PC-3 (cell line): ENCODE measurements at regions of chr1 and their contacts with region 1.

Region 1: GRCh38 chr1:233613252-233614174 is at the start of gene KCNK1:
- DNase-seq: peak; percentile 96
- ATAC-seq: peak; percentile 88
- H3K4me3 ChIP-seq: peak within 1 kb of the TSS; percentile 90
- H3K27ac ChIP-seq: peak within 1 kb of the TSS; percentile 86
- H3K4me1 ChIP-seq: peaks cover 24% of the 10 kb centered on the region
- H3K27me3 ChIP-seq: no peaks in the 10 kb centered on the region
- CTCF ChIP-seq: no peak
- total RNA-seq, gene KCNK1: 31.1 and 34.7 TPM in 2 replicates

Region 2: GRCh38 chr1:233518349-233518748 is 95.2 kb before region 1 on chr1:
- CTCF ChIA-PET with region 1: no interaction called
- POLR2A ChIA-PET with region 1: no interaction called
- intact Hi-C with region 1: loop called (anchors 10 kb)
- DNase-seq: peak; percentile 85
- ATAC-seq: no peak
- H3K4me3 ChIP-seq: no peak overlapping the region
- H3K27ac ChIP-seq: no peak overlapping the region
- H3K4me1 ChIP-seq: peaks cover 17% of the 10 kb centered on the region
- H3K27me3 ChIP-seq: no peaks in the 10 kb centered on the region
- CTCF ChIP-seq: peak; percentile 98

Region 3: GRCh38 chr1:233543340-233544255 is 69.9 kb before region 1 on chr1:
- CTCF ChIA-PET with region 1: no interaction called
- POLR2A ChIA-PET with region 1: no interaction called
- intact Hi-C with region 1: loop called (anchors 1 kb)
- DNase-seq: peak; percentile 98
- ATAC-seq: peak; percentile 100
- H3K4me3 ChIP-seq: no peak overlapping the region
- H3K27ac ChIP-seq: peak overlapping the region; percentile 78
- H3K4me1 ChIP-seq: peaks cover 17% of the 10 kb centered on the region
- H3K27me3 ChIP-seq: no peaks in the 10 kb centered on the region
- CTCF ChIP-seq: no peak

Region 4: GRCh38 chr1:233662575-233663304 is 49.2 kb after region 1 on chr1:
- CTCF ChIA-PET with region 1: no interaction called
- POLR2A ChIA-PET with region 1: no interaction called
- intact Hi-C with region 1: no loop called
- DNase-seq: no peak
- ATAC-seq: no peak
- H3K4me3 ChIP-seq: no peak overlapping the region
- H3K27ac ChIP-seq: no peak overlapping the region
- H3K4me1 ChIP-seq: no peaks in the 10 kb centered on the region; the same call in 1 of the 2 replicates
- H3K27me3 ChIP-seq: no peaks in the 10 kb centered on the region
- CTCF ChIP-seq: no peak

Region 5: GRCh38 chr1:233675893-233676292 is 62.4 kb after region 1 on chr1:
- CTCF ChIA-PET with region 1: no interaction called
- POLR2A ChIA-PET with region 1: no interaction called
- intact Hi-C with region 1: loop called (anchors 2 kb)
- DNase-seq: no peak
- ATAC-seq: no peak
- H3K4me3 ChIP-seq: no peak overlapping the region
- H3K27ac ChIP-seq: no peak overlapping the region
- H3K4me1 ChIP-seq: peaks cover 19% of the 10 kb centered on the region
- H3K27me3 ChIP-seq: no peaks in the 10 kb centered on the region
- CTCF ChIP-seq: peak; percentile 54

Region 6: DNA sequence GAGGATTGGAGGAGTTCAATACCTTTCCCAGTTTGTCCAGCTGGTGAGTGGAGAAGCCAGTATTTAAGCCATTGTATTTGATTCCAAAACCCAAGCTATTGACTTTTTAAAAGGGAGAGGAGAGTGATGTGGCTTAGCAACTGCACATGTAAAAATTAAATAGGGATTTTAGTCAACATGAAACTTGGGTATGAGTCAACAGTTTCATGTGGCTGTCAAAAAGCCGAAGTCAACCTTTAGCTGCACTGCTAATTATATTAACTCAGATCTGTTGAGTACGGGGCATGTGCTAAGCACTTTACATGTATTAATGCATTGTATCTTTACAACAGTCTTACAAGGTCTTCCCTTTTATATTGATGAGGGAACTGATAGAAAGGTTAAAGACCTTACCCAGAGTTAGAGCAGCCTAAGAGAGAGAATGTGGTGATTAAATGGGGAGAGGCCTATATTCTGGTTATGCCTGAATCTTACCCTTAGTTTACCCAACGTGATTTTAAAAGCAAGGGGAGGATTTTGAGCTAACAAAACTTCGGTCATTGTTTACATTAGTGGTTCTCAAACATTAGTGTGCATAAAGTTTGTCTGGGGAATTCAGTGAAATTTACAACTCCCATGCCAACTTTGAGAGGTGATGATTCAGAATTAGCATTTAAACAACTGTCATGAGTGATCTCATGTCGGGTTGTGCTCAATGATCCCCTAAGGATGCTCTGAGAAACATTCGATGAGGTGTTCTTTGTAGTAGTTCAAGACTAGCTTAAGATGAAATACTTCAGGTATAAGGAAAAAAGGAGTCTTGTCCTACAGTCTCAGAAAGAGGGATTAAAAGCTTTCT is 284.0 kb after region 1 on chr1:
- CTCF ChIA-PET with region 1: no interaction called
- POLR2A ChIA-PET with region 1: interaction called, 6 read pairs
- intact Hi-C with region 1: loop called (anchors 5 kb)
- DNase-seq: peak; percentile 94
- ATAC-seq: peak; percentile 93
- H3K4me3 ChIP-seq: peak overlapping the region; percentile 0; the same call in 1 of the 2 replicates
- H3K27ac ChIP-seq: peak overlapping the region; percentile 91
- H3K4me1 ChIP-seq: peaks cover 25% of the 10 kb centered on the region
- H3K27me3 ChIP-seq: no peaks in the 10 kb centered on the region
- CTCF ChIP-seq: no peak